Psoas muscle (tissue), 8 donors: ENCODE measurements at regions of chr9 and their contacts with region 1.

Region 1: DNA sequence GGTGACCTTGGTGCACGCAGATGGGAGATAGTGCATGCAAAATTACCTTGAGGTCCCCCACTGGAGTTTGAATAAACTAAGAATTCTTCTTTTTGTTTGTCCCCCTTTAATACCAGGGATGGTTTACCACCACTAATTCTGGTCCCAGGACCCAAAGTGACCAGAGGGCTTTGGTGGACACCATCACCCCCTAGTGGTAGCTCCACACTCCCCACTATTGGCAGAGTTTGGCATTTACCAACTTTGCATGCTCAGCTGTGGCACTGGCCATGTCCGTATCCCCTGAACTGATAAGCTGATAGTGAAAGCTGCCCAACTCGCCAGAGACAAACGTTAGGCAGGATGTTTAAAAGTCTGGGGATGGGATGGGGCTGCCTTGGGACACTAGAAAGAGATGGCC is 3.3 kb downstream of the ASTN2 start:
- DNase-seq: no peak
- ATAC-seq: peak; percentile 52 to 81 (median 68)
- H3K4me3 ChIP-seq: no peak overlapping the region
- H3K27ac ChIP-seq: no peak overlapping the region
- H3K4me1 ChIP-seq: no peaks in the 10 kb centered on the region
- H3K27me3 ChIP-seq: peaks cover 3 to 40% (median 11%) of the 10 kb centered on the region in 3 donors
- CTCF ChIP-seq: peak; percentile 49

Region 2: GRCh38 chr9:116737152-116737546 is 674.4 kb before region 1 on chr9:
- intact Hi-C with region 1: loop called in 1 of 2 experiments (anchors 5 kb)
- DNase-seq: peak; percentile 75 to 86
- ATAC-seq: peak; percentile 78 to 93 (median 83)
- H3K4me3 ChIP-seq: no peak overlapping the region
- H3K27ac ChIP-seq: no peak overlapping the region
- H3K4me1 ChIP-seq: no peaks in the 10 kb centered on the region
- H3K27me3 ChIP-seq: no peaks in the 10 kb centered on the region
- CTCF ChIP-seq: peak; percentile 80

Region 3: DNA sequence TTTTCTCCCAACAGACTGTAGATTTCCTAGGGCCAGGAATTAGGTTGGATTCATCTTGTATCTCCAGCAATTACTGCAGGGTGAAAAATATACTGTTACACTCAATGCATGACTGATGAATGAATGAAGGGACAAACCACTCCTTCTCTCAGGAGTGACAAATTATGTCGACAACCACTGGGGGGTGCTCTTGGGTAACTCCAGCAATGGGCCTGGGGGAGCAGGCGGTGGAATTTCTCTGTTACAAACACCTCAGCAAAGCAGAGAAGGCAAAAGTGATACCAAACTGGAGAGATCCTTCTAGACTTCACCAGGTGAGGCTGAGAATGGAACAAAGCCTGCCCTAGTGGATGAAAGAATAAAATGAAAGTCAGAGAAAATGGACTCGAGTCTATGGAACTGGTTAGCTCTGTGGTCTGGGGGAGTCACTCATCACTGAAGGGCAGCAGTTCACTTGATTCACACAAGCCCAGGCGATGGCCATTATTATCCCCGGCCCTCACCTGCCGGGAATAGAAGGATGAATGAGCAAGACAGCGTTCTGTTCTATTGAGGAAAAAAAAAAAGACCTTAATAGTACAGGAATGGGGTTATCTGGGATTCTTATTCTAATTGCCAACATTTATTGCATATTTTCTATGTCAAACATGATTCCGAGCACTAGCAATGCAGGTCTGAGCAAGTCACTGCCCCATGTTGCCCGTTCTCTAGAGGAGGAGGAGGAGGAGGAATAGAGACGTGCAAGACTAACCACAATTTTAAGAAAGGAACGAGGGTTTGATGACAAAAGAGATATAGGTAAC is 337.8 kb before region 1 on chr9:
- intact Hi-C with region 1: loop called in 1 of 2 experiments (anchors 10 kb)
- DNase-seq: no peak
- ATAC-seq: peak in 2 of 4 donors; percentile 52 to 56
- H3K4me3 ChIP-seq: no peak overlapping the region
- H3K27ac ChIP-seq: no peak overlapping the region
- H3K4me1 ChIP-seq: no peaks in the 10 kb centered on the region
- H3K27me3 ChIP-seq: peaks cover 0 to 4% (median 0%) of the 10 kb centered on the region in 3 donors
- CTCF ChIP-seq: peak; percentile 43

Region 4: GRCh38 chr9:117437283-117437682 is 25.7 kb after region 1 on chr9:
- intact Hi-C with region 1: no loop called
- DNase-seq: no peak
- ATAC-seq: no peak
- H3K4me3 ChIP-seq: no peak overlapping the region
- H3K27ac ChIP-seq: no peak overlapping the region
- H3K4me1 ChIP-seq: no peaks in the 10 kb centered on the region
- H3K27me3 ChIP-seq: no peaks in the 10 kb centered on the region
- CTCF ChIP-seq: no peak

Region 5: GRCh38 chr9:117448066-117448714 is 36.6 kb after region 1 on chr9:
- intact Hi-C with region 1: no loop called
- DNase-seq: no peak
- ATAC-seq: no peak
- H3K4me3 ChIP-seq: no peak overlapping the region
- H3K27ac ChIP-seq: no peak overlapping the region
- H3K4me1 ChIP-seq: no peaks in the 10 kb centered on the region
- H3K27me3 ChIP-seq: no peaks in the 10 kb centered on the region
- CTCF ChIP-seq: no peak

Region 6: GRCh38 chr9:118003240-118003639 is 591.7 kb after region 1 on chr9:
- intact Hi-C with region 1: no loop called
- DNase-seq: no peak
- ATAC-seq: no peak
- H3K4me3 ChIP-seq: no peak overlapping the region
- H3K27ac ChIP-seq: no peak overlapping the region
- H3K4me1 ChIP-seq: no peaks in the 10 kb centered on the region
- H3K27me3 ChIP-seq: no peaks in the 10 kb centered on the region
- CTCF ChIP-seq: no peak